Heart right ventricle (tissue), 16 donors: ENCODE measurements at regions of chr12 and their contacts with region 1.

Region 1: DNA sequence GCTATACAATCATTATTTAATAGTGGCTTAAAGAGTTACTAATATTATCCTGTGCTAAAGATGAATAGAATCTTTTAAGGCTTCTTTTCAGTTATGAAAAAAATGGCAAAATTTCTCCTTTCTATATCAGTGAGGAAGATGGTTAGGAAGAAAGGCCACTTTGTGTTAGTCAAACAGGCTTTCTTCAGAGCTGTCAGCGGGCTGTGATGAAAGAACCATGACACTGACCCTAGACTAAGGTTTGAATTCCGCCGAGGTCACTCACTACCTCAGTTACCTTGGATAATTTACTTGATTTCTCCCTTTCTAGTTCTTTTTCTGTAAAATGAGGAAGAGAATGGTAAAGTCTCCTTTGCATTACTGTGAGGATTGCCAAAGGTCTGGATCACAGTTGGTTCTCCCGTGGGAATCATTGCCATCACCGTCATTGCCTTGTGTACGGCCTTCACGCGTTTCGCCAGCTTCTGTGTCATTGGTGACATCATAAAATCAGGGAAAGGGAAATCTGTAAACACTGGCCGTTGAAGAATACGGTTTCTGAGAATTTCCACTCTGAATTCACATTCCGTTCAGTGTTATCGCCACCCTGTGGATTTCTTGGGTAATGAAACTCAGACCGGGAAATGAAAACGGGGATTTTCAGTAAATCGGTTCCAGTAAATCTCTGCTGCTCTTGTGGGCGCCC is 26.7 kb upstream of the YBX3 start:
- DNase-seq: peak; percentile 20 to 87
- ATAC-seq: peak; percentile 64 to 96 (median 92)
- H3K4me3 ChIP-seq: peak overlapping the region in 8 of 10 donors; percentile 8 to 46 (median 44)
- H3K27ac ChIP-seq: peak overlapping the region in 6 of 10 donors; percentile 11 to 62 (median 42)
- H3K4me1 ChIP-seq: peaks cover 0 to 16% (median 3%) of the 10 kb centered on the region in 9 donors
- H3K27me3 ChIP-seq: peaks cover 0 to 7% (median 0%) of the 10 kb centered on the region in 7 donors
- CTCF ChIP-seq: peak; percentile 78 to 98 (median 88)

Region 2: DNA sequence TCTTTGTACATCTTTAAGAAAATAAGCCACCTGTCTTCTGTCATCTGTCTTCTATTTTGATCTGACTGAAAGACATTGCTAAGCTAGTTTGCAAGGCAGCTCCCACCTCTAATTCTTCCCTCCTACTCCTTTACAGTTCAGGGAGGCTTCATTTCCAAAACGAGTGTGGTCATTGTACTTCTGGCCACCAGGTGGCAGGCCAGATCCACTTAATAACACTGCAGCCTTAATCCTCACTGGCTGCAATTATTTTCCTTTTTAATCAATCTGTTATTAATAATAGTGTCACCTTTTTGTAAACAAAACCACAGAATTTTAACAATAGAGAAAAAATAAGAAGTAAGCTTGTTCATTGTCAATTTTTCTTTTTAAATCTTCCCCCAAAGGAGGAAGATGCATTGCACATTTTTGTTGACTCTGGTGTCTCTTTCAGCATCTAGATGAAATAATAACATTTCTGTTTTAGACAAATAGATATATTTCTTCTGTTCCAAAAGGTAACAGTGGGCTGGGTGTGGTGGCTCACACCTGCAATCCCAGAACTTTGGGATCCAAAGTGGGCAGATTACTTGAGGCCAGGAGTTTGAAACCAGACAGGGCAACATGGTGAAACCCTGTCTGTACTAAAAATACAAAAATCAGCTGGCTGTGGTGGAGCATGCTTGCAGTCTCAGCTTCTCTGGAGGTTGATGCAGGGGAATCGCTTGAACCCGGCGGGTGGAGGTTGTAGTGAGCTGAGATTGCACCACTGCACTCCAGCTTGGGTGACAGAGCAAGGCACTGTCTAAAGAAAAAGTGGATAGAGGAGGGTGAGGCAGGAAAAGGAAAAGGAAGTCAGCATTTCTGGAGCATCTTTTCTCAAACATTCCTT is 513.8 kb before region 1 on chr12:
- intact Hi-C with region 1: loop called in 4 of 10 experiments (anchors 5 to 10 kb)
- DNase-seq: no peak
- ATAC-seq: peak in 7 of 8 donors; percentile 52 to 83 (median 82)
- H3K4me3 ChIP-seq: no peak overlapping the region
- H3K27ac ChIP-seq: no peak overlapping the region
- H3K4me1 ChIP-seq: no peaks in the 10 kb centered on the region
- H3K27me3 ChIP-seq: no peaks in the 10 kb centered on the region
- CTCF ChIP-seq: peak; percentile 77 to 93 (median 88)

Region 3: DNA sequence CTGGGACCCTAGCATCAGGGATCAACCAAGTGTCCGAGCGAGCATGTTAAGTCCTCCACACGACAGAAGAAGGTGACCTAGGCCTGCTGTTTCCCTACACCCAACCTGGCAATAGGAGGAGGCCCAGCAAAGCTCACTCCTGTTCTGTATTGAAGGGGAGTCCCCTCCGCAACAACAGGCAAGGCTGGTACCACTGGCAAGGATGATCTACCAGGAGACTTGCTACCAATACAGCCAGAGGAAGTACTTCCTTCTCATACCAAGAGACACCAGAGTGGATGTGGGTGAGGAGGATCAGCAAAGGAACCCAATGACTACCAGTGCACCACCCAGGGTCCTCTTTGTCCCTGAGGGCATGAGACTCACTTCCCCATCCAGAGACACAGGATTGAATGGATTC is 301.6 kb before region 1 on chr12:
- intact Hi-C with region 1: loop called in 1 of 10 experiments (anchors 10 kb)
- DNase-seq: no peak
- ATAC-seq: no peak
- H3K4me3 ChIP-seq: no peak overlapping the region
- H3K27ac ChIP-seq: no peak overlapping the region
- H3K4me1 ChIP-seq: no peaks in the 10 kb centered on the region
- H3K27me3 ChIP-seq: no peaks in the 10 kb centered on the region
- CTCF ChIP-seq: no peak

Region 4: DNA sequence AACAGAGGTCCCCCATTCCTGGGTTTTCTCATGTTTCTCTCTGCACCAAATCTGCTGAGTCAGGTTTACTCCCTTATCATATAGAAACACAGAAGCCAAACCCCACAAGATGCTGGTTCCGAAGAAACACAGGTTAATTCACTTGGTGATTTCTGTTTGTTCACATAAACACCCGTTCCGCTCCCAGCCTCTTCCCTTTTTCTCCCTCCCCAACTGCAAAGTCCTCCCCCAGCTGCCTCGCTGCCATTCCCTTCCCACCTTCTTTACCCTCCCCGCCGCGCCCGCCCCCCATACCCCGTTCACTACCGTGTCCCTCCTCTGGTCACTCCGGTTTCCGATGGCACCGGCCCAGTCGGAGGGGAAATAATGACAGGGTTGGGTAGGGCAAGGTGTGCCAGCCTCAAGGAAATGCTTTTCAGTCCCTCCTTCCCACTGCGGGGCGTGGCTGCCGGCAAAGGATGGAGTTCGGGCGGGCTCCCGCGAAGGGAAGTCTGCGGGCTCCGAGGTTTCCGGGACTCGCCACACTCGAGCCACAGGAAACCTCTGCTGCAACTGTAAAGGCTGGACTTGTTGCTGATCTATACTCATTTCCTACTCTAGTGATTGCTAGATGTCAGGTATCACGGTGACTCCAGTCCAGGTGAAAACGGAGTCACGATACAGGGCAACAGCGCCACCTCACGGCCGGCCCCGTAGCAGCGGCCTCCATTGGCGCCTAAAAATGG is 76.0 kb before region 1 on chr12 and contains the start of gene STYK1:
- intact Hi-C with region 1: loop called in 1 of 10 experiments (anchors 10 kb)
- DNase-seq: peak; percentile 12 to 29
- ATAC-seq: peak; percentile 23 to 66 (median 46)
- H3K4me3 ChIP-seq: peak within 1 kb of the TSS; percentile 22 to 56 (median 54)
- H3K27ac ChIP-seq: no peak within 1 kb of the TSS
- H3K4me1 ChIP-seq: peaks cover 0 to 18% (median 8%) of the 10 kb centered on the region in 9 donors
- H3K27me3 ChIP-seq: peaks cover 0 to 81% (median 29%) of the 10 kb centered on the region in 7 donors
- CTCF ChIP-seq: peak; percentile 53 to 84 (median 76)
- total RNA-seq, gene STYK1: 0.15 to 1.2 (median 0.15) TPM in 3 of 10 donors, not detected in the others

Region 5: GRCh38 chr12:10721651-10722501 is 28.0 kb before region 1 on chr12:
- intact Hi-C with region 1: loop called in 3 of 10 experiments (anchors 1 to 5 kb)
- DNase-seq: peak; percentile 82 to 94
- ATAC-seq: peak; percentile 86 to 96 (median 92)
- H3K4me3 ChIP-seq: peak overlapping the region; percentile 73 to 95 (median 92)
- H3K27ac ChIP-seq: peak overlapping the region; percentile 93 to 100 (median 98)
- H3K4me1 ChIP-seq: peaks cover 16 to 57% (median 54%) of the 10 kb centered on the region in 9 donors
- H3K27me3 ChIP-seq: peaks cover 0 to 18% (median 0%) of the 10 kb centered on the region in 7 donors
- CTCF ChIP-seq: no peak

Region 6: DNA sequence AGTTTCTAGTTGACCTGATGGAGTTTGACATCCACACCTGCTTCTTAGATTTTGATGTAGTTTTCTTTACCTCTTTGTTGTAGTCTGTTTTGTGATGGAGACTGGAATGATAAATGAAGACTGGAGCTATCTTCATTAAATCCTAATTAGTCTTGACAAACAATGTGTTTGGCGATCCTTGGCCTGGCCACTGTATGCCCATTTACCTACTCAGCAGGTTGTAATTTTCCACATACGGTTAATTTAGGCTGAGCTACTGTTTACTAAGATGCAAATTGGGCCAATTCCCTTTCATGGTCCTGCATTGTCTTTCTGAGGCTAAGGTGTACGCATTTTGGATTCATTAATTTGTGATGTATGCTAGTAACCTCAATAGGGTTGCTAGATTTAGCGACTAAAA is 52.7 kb after region 1 on chr12 and contains the start of gene TAS2R7:
- intact Hi-C with region 1: no loop called
- DNase-seq: no peak
- ATAC-seq: no peak
- H3K4me3 ChIP-seq: no peak within 1 kb of the TSS
- H3K27ac ChIP-seq: no peak within 1 kb of the TSS
- H3K4me1 ChIP-seq: no peaks in the 10 kb centered on the region
- H3K27me3 ChIP-seq: peaks cover 0 to 5% (median 0%) of the 10 kb centered on the region in 7 donors
- CTCF ChIP-seq: no peak
- total RNA-seq, gene TAS2R7: not detected